ENCODE measurements at regions of chr2 and their contacts with region 1.

Region 1: GRCh38 chr2:60899230-60899891 is 18.0 kb downstream of the REL start:
- DNase-seq: no peak
- ATAC-seq: no peak
- H3K4me3 ChIP-seq: no peak overlapping the region
- H3K27ac ChIP-seq: no peak overlapping the region
- H3K4me1 ChIP-seq: no peaks in the 10 kb centered on the region
- H3K27me3 ChIP-seq: no peaks in the 10 kb centered on the region
- CTCF ChIP-seq: no peak

Region 2: GRCh38 chr2:61055557-61055956 is 156.2 kb after region 1 on chr2:
- CTCF ChIA-PET with region 1: no interaction called
- POLR2A ChIA-PET with region 1: no interaction called
- in situ Hi-C with region 1: no loop called
- intact Hi-C with region 1: no loop called
- DNase-seq: no peak
- ATAC-seq: no peak
- H3K4me3 ChIP-seq: no peak overlapping the region
- H3K27ac ChIP-seq: no peak overlapping the region
- H3K4me1 ChIP-seq: no peaks in the 10 kb centered on the region
- H3K27me3 ChIP-seq: no peaks in the 10 kb centered on the region
- CTCF ChIP-seq: no peak

Region 3: GRCh38 chr2:61085883-61086282 is 186.5 kb after region 1 on chr2:
- CTCF ChIA-PET with region 1: no interaction called
- POLR2A ChIA-PET with region 1: interaction called, 11 read pairs
- in situ Hi-C with region 1: no loop called
- intact Hi-C with region 1: no loop called
- DNase-seq: no peak
- ATAC-seq: no peak
- H3K4me3 ChIP-seq: no peak overlapping the region
- H3K27ac ChIP-seq: no peak overlapping the region
- H3K4me1 ChIP-seq: no peaks in the 10 kb centered on the region
- H3K27me3 ChIP-seq: no peaks in the 10 kb centered on the region
- CTCF ChIP-seq: no peak

Measured in Panc1 (cell line).